Activated naive CD4-positive, alpha-beta T cell treated with anti-CD3 and anti-CD28 coated beads for 36 hours (primary cell): ENCODE measurements at regions of chr16 and their contacts with region 1.

Region 1: GRCh38 chr16:10812312-10813098 is 6.1 kb downstream of the TVP23A start:
- DNase-seq: peak; percentile 5
- H3K4me3 Mint-ChIP-seq: no peak overlapping the region
- H3K27ac Mint-ChIP-seq: no peak overlapping the region
- H3K4me1 Mint-ChIP-seq: peaks cover 5% of the 10 kb centered on the region
- H3K27me3 Mint-ChIP-seq: peaks cover under 1% of the 10 kb centered on the region

Region 2: DNA sequence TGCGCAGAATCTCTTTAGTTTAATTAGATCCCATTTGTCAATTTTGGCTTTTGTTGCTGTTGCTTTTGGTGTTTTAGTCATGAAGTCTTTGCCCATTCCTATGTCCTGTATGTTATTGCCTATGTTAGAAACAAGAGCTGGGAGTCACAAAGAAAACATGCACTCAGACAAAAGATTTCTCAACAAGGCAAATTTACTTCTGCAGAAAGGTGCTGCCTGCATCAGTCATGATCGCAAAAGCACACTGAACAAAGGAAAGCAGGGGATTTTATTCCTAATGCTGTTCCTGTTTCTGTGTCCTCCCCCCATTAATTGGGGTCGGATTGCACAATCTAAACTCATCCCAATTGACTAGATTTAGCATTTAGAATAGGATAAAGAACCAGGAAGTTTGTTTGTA is 370.8 kb before region 1 on chr16:
- CTCF ChIA-PET with region 1: no interaction called
- intact Hi-C with region 1: no loop called
- DNase-seq: no peak
- H3K4me3 Mint-ChIP-seq: no peak overlapping the region
- H3K27ac Mint-ChIP-seq: no peak overlapping the region
- H3K4me1 Mint-ChIP-seq: no peaks in the 10 kb centered on the region
- H3K27me3 Mint-ChIP-seq: no peaks in the 10 kb centered on the region

Region 3: DNA sequence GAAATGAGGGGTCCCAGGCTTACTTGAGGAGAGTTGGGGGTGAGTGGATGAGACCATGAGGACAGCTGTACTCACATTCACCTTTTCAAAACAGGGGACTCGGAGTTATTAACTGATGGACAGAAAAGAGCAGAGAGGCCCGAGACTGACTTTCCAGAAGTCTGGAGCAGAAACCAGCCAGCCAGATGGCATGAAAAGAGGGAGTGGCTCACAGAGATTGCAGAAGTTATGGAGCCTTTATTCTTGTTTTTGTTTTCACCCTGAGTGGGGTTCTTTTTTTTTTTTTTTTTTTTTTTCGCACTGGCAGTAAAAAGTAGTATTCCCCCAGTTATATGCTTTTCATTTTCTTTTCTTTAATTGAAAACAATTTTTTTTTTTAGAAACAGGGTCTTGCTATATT is 12.8 kb before region 1 on chr16:
- CTCF ChIA-PET with region 1: no interaction called
- intact Hi-C with region 1: no loop called
- DNase-seq: no peak
- H3K4me3 Mint-ChIP-seq: no peak overlapping the region
- H3K27ac Mint-ChIP-seq: no peak overlapping the region
- H3K4me1 Mint-ChIP-seq: no peaks in the 10 kb centered on the region
- H3K27me3 Mint-ChIP-seq: no peaks in the 10 kb centered on the region

Region 4: DNA sequence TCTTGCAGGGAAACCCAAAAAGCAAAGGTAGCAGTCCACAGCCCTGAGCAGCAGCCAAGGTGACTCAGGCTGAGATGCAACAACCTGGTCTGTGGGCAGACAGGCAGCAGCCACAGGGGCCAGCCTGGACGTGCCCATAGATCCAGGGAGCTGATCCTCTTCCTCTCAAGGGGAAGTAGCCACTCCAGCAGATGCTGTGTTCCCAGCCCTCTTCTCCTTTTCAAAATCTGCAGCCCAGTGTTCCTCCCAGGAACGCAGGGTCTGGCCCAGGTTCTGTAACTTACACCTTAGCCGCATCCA is 47.2 kb after region 1 on chr16:
- CTCF ChIA-PET with region 1: no interaction called
- intact Hi-C with region 1: no loop called
- DNase-seq: no peak
- H3K4me3 Mint-ChIP-seq: no peak overlapping the region
- H3K27ac Mint-ChIP-seq: no peak overlapping the region
- H3K4me1 Mint-ChIP-seq: no peaks in the 10 kb centered on the region
- H3K27me3 Mint-ChIP-seq: peaks cover 9% of the 10 kb centered on the region

Region 5: GRCh38 chr16:10871149-10871991 is 58.9 kb after region 1 on chr16:
- CTCF ChIA-PET with region 1: no interaction called
- intact Hi-C with region 1: loop called (anchors 2 kb)
- DNase-seq: peak; percentile 81
- H3K4me3 Mint-ChIP-seq: no peak overlapping the region
- H3K27ac Mint-ChIP-seq: no peak overlapping the region
- H3K4me1 Mint-ChIP-seq: peaks cover 36% of the 10 kb centered on the region
- H3K27me3 Mint-ChIP-seq: peaks cover 43% of the 10 kb centered on the region